HCT116 (cell line): ENCODE measurements at regions of chr9 and their contacts with region 1.

Region 1: DNA sequence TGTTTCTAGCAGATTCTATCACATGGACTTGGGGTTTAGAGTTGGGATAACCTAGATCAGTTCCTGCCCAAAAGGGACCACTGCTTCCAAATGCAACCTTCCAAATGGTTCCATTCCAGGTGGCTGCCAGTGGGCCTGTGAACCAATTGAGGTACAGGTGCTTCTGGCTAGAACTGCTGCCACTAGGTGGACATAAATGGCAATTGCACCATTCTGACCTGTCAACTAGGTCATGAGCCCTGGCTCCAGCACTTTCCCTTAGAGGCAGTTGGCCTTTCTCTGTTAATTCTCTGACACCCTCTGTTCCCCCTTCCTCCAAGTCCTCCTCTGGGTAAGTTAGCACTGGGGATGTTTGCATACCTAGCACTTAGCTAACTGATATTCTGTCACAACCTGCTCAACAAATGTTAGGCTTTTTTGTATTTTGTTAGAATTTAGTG is 16.6 kb upstream of the HEMGN start:
- DNase-seq: peak; percentile 59
- ATAC-seq: peak; percentile 99
- H3K4me3 ChIP-seq: no peak overlapping the region
- H3K27ac ChIP-seq: no peak overlapping the region
- H3K4me1 ChIP-seq: peaks cover 0 to 5% of the 10 kb centered on the region in 2 experiments; a peak in 1 of 4 replicates
- H3K27me3 ChIP-seq: no peaks in the 10 kb centered on the region
- CTCF ChIP-seq: peak; percentile 74 to 86 (median 78)
- POLR2A ChIP-seq: no peak
- RAD21 ChIP-seq: peak; percentile 64

Region 2: DNA sequence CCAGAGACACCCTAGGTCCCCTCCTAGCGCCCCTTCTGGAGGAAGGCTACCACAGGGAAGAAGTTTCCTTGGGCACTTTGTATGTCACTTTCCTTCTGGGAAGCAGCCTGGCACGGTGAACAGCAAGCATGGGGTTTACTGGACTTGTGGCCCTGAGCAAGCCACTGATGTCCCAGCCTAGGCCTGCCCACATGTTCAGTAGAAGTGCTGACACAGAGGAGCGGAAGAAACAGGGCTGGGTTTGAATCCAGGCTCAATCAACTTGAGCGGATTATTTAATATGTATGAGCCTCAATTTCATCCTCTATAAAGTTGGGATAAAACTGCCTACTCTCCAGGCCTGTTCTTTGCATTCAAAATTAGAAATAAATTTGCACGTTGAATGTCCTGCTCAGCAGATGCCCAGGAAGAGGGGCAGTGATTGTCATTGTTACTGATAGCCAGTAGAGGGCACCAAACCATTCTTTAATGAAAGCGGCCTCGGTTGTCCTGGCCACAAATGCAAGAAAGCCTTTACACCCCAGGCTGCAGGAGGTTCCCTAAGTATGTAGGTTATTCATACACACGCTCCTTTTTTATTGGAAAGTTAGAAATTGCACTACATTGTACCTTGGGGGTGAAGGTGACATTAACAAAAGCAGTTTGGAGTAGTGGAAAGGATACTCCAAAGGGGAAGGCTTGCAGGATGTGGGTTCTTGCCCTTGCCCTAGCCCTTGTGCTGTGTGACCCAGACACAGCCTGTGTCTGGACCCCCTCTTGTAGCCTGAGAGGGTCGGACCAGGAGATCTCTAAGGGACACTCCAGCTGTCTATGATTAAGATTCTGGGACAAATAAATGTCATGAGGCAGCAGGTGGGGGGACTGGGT is 244.0 kb before region 1 on chr9:
- CTCF ChIA-PET with region 1: no interaction called
- POLR2A ChIA-PET with region 1: no interaction called
- RAD21 ChIA-PET with region 1: no interaction called
- intact Hi-C with region 1: loop called (anchors 1 kb)
- DNase-seq: peak; percentile 47
- ATAC-seq: peak; percentile 88
- H3K4me3 ChIP-seq: no peak overlapping the region
- H3K27ac ChIP-seq: no peak overlapping the region
- H3K4me1 ChIP-seq: peaks cover 11 to 13% of the 10 kb centered on the region in 2 experiments
- H3K27me3 ChIP-seq: no peaks in the 10 kb centered on the region
- CTCF ChIP-seq: peak; percentile 71 to 89 (median 82)
- POLR2A ChIP-seq: no peak
- RAD21 ChIP-seq: peak; percentile 95